ENCODE measurements at regions of chr13 and their contacts with region 1.

Region 1: DNA sequence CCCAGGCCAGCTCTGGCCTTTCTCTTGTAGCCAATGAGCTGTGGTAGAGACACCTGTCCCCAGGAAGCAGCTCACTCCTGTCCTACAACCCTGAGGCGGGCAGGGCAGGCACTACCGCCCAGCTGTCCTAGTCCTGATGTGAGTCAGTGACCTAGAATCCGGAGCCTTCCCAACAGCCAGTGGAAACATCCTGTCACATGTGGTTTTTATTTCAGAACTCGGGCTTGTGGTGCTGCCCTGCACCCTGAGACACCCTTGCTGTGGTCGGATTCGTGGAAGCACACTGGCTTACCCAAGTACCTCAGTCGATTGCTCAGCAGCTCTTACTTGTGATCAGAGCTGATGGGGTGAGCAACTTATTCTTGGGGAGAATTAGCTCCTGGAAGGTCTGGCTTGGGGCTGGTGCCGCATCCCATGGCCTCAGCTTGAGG is 83.6 kb upstream of the ARHGEF7 start:
- DNase-seq: peak; percentile 78
- H3K4me3 ChIP-seq: no peak overlapping the region
- H3K27ac ChIP-seq: no peak overlapping the region
- H3K4me1 ChIP-seq: peaks cover 31% of the 10 kb centered on the region
- H3K27me3 ChIP-seq: no peaks in the 10 kb centered on the region
- CTCF ChIP-seq: no peak

Region 2: DNA sequence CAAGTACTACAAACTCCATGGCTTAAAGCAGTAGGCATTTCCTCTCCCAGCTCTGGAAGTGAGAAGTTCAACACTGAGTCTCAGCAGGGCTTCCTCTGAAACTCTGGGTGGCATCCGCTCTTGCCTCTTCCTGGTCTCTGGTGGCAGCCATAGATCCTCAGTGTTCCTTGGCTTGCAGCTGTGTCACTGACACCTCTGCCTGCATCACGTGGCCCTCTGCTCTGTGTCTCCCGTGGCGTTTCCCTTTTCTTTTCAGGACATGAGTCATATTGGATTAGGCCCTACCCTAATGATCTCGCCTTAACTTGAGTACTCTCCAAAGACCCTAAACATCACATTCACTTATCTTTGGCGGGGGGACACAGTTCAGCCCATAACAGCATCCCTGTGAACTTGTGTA is 1935.4 kb before region 1 on chr13:
- CTCF ChIA-PET with region 1: no interaction called
- dilution Hi-C with region 1: no loop called
- in situ Hi-C with region 1: no loop called
- intact Hi-C with region 1: no loop called
- DNase-seq: no peak
- H3K4me3 ChIP-seq: no peak overlapping the region
- H3K27ac ChIP-seq: no peak overlapping the region
- H3K4me1 ChIP-seq: peaks cover 3% of the 10 kb centered on the region
- H3K27me3 ChIP-seq: no peaks in the 10 kb centered on the region
- CTCF ChIP-seq: no peak

Region 3: DNA sequence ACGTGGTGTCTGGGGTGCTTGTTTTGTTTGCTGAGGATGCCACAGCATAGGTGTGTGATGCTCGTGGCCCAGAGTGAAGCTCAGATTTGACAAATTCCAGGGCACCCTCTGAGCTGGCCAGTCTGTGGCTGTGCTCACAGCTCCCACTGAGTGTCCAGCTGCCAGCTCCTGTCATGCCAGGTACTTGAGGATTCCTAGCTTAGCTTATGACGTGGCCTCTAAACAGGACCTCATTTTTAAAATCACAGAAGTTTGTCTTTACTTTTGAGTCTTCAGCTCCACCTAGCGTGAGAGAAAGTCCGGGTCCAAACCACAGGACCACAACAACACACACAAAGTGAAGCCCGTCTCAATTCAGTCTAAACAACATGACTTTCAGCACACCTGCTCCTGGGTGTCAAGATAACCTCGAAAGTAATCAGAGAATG is 587.3 kb before region 1 on chr13:
- CTCF ChIA-PET with region 1: no interaction called
- dilution Hi-C with region 1: no loop called
- in situ Hi-C with region 1: no loop called
- intact Hi-C with region 1: no loop called
- DNase-seq: peak; percentile 54
- H3K4me3 ChIP-seq: no peak overlapping the region
- H3K27ac ChIP-seq: no peak overlapping the region
- H3K4me1 ChIP-seq: peaks cover 66% of the 10 kb centered on the region
- H3K27me3 ChIP-seq: no peaks in the 10 kb centered on the region
- CTCF ChIP-seq: peak; percentile 20 to 47

Region 4: DNA sequence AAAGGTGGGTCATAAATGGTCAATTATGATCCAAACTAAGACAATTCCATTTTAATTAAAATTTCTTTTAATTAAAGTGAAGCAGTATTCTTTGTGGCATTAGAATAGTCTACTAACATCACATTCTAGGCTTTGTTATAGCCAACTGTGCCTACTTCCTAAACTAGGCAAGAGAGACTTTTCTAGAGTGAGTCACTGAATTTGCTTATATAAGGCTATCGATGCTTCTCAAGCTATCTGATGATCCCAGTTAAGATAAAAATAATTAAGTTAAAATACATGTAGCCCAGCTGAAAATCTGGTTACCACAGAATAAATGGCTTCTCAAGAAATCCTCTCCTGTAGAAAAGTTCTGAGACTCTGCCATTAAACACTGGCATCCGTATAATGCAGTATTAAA is 129.2 kb before region 1 on chr13:
- CTCF ChIA-PET with region 1: no interaction called
- dilution Hi-C with region 1: no loop called
- in situ Hi-C with region 1: no loop called
- intact Hi-C with region 1: no loop called
- DNase-seq: no peak
- H3K4me3 ChIP-seq: no peak overlapping the region
- H3K27ac ChIP-seq: no peak overlapping the region
- H3K4me1 ChIP-seq: peaks cover 14% of the 10 kb centered on the region
- H3K27me3 ChIP-seq: no peaks in the 10 kb centered on the region
- CTCF ChIP-seq: no peak

Region 5: DNA sequence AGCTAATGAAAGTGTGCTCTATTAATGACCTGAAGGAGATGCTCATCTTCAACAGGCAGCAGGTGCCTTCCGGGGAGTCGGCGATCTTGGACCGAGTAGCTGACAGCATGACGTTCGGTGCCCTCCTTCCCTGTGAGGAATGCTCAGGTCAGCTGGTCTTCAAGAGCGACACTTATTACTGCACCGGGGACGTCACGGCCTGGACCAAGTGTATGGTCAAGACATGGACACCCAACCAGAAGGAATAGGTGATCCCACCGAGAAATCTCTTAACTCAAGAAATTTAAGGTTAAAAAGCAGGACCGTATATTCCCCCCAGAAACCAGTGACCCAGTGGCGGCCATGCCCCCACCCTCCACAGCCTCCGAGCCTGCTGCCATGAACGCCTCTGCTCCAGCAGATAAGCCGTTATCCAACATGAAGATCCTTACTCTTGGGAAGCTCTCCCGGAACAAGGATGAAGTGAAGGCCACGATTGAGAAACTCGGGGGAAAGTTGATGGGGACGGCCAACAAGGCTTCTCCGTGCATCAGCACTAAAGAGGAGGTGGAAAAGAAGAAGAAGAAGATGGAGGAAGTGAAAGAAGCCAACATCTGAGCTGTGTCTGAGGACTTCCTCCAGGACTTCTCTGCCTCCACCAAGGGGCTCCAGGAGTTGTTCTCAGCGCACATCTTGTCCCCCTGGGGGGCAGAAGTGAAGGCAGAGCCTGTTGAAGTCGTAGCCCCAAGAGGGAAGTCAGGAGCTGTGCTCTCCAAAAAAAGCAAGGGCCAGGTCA is 93.8 kb before region 1 on chr13:
- CTCF ChIA-PET with region 1: no interaction called
- dilution Hi-C with region 1: loop called (anchors 5 kb)
- in situ Hi-C with region 1: loop called in 1 of 2 experiments (anchors 10 kb)
- intact Hi-C with region 1: no loop called
- DNase-seq: no peak
- H3K4me3 ChIP-seq: no peak overlapping the region
- H3K27ac ChIP-seq: no peak overlapping the region
- H3K4me1 ChIP-seq: no peaks in the 10 kb centered on the region
- H3K27me3 ChIP-seq: no peaks in the 10 kb centered on the region
- CTCF ChIP-seq: no peak

Region 6: GRCh38 chr13:111153279-111153976 is 121.9 kb after region 1 on chr13:
- CTCF ChIA-PET with region 1: no interaction called
- dilution Hi-C with region 1: no loop called
- in situ Hi-C with region 1: no loop called
- intact Hi-C with region 1: no loop called
- DNase-seq: peak; percentile 90
- H3K4me3 ChIP-seq: peak overlapping the region; percentile 54 to 87 (median 81)
- H3K27ac ChIP-seq: peak overlapping the region; percentile 86
- H3K4me1 ChIP-seq: peaks cover 14% of the 10 kb centered on the region
- H3K27me3 ChIP-seq: no peaks in the 10 kb centered on the region
- CTCF ChIP-seq: peak in 1 of 2 donors; percentile 31

Region 7: GRCh38 chr13:111460548-111461444 is 429.2 kb after region 1 on chr13:
- CTCF ChIA-PET with region 1: interaction called, 17 read pairs
- dilution Hi-C with region 1: no loop called
- in situ Hi-C with region 1: no loop called
- intact Hi-C with region 1: no loop called
- DNase-seq: peak; percentile 19
- H3K4me3 ChIP-seq: no peak overlapping the region
- H3K27ac ChIP-seq: no peak overlapping the region
- H3K4me1 ChIP-seq: no peaks in the 10 kb centered on the region
- H3K27me3 ChIP-seq: no peaks in the 10 kb centered on the region
- CTCF ChIP-seq: peak; percentile 10 to 31